Left lung (tissue), 14 donors: ENCODE measurements at regions of chr9 and their contacts with region 1.

Region 1: GRCh38 chr9:83544002-83544698 is 5.9 kb upstream of the FRMD3 start:
- DNase-seq: peak in 1 of 4 donors; percentile 24
- ATAC-seq: peak; percentile 95
- H3K4me3 ChIP-seq: no peak overlapping the region
- H3K27ac ChIP-seq: no peak overlapping the region
- H3K4me1 ChIP-seq: no peaks in the 10 kb centered on the region
- H3K27me3 ChIP-seq: no peaks in the 10 kb centered on the region
- CTCF ChIP-seq: peak; percentile 71 to 75

Region 2: GRCh38 chr9:83334320-83334719 is 209.8 kb before region 1 on chr9:
- intact Hi-C with region 1: loop called in 1 of 2 experiments (anchors 5 kb)
- DNase-seq: peak; percentile 60 to 89 (median 75)
- ATAC-seq: peak; percentile 99
- H3K4me3 ChIP-seq: no peak overlapping the region
- H3K27ac ChIP-seq: no peak overlapping the region
- H3K4me1 ChIP-seq: no peaks in the 10 kb centered on the region
- H3K27me3 ChIP-seq: no peaks in the 10 kb centered on the region
- CTCF ChIP-seq: peak; percentile 86 to 89

Region 3: DNA sequence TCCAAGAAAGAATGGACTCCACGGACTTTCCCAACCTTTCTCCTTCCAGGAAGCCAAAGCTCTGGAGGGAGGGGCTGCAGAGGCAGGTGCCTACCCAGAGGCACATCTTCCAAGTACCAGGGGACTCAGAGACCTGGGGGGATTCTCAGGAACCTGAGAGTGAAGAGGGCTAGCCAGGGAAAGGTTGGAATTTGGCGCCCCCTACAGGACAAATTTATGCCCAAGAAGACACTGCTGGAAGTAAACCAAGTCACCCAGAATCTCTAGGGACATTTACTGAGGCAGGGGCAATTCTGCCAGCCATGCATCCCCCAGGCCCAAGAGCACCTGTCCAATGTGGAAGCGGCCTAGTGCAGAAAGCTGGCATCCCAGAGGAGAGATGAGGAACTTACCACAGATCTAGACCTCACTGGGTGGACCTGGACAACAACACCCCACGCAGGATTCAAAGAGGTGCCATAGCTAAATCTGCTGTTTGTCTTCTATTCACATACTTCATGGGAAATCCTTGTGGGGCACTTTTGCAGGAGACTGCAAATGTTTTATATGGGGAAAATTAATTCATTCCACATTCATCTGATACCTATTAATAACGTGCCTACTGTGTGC is 52.9 kb after region 1 on chr9:
- intact Hi-C with region 1: no loop called
- DNase-seq: peak in 2 of 4 donors; percentile 13 to 14
- ATAC-seq: peak; percentile 47
- H3K4me3 ChIP-seq: no peak overlapping the region
- H3K27ac ChIP-seq: no peak overlapping the region
- H3K4me1 ChIP-seq: peaks cover 0 to 13% of the 10 kb centered on the region in 2 donors
- H3K27me3 ChIP-seq: no peaks in the 10 kb centered on the region
- CTCF ChIP-seq: peak; percentile 67 to 69